Activated CD8-positive, alpha-beta T cell treated with anti-CD3 and anti-CD28 coated beads for 36 hours (primary cell): ENCODE measurements at regions of chr4 and their contacts with region 1.

Region 1: DNA sequence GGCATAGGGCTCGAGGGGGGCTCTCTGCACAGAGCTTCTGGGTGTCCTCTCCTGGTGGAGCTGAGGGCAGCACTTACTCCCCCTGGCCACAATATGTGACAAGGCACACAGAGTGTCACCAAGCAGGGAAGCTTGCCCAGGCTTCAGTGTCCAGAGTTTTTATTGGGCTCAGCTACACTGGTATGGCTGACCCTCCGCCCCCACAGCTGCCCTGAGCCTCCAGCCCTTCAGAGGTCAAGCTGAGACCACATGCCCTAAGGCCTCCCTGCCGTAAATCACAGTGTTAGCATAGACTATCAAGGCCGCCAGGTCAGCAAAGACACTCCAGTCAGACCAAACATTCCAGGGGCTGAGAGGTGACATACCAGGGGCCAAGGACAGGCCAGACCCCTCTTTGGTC is 59.0 kb downstream of the EVC start:
- DNase-seq: no peak
- ATAC-seq: no peak
- H3K4me3 Mint-ChIP-seq: no peak overlapping the region
- H3K27ac Mint-ChIP-seq: no peak overlapping the region
- H3K4me1 Mint-ChIP-seq: no peaks in the 10 kb centered on the region
- H3K27me3 Mint-ChIP-seq: peaks cover 2% of the 10 kb centered on the region
- CTCF ChIP-seq: no peak

Region 2: DNA sequence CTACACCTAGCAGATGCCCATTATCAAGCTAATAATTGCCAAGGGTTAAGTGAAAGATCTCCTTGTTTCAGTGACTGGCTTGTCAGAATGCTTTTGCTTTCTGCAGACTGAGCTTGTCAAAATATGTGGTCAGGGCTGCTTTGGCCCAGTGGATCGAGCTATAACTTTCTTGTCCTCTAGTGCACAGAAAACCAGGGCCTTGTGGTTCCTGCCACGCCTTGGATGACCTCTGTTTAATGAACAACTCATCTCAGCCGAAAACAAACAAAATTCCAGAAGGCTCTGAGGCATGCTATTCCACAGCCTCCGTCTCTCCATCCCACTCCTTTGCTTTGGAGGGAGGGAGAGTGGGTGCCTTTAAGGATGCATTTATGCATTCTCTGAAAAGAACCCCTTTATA is 47.7 kb before region 1 on chr4:
- CTCF ChIA-PET with region 1: no interaction called
- POLR2A ChIA-PET with region 1: no interaction called
- intact Hi-C with region 1: no loop called
- DNase-seq: no peak
- ATAC-seq: no peak
- H3K4me3 Mint-ChIP-seq: no peak overlapping the region
- H3K27ac Mint-ChIP-seq: no peak overlapping the region
- H3K4me1 Mint-ChIP-seq: no peaks in the 10 kb centered on the region
- H3K27me3 Mint-ChIP-seq: peaks cover 2% of the 10 kb centered on the region
- CTCF ChIP-seq: no peak

Region 3: GRCh38 chr4:5758741-5759140 is 11.3 kb before region 1 on chr4:
- CTCF ChIA-PET with region 1: no interaction called
- POLR2A ChIA-PET with region 1: no interaction called
- intact Hi-C with region 1: loop called (anchors 1 kb)
- DNase-seq: peak; percentile 85
- ATAC-seq: peak; percentile 98
- H3K4me3 Mint-ChIP-seq: no peak overlapping the region
- H3K27ac Mint-ChIP-seq: no peak overlapping the region
- H3K4me1 Mint-ChIP-seq: peaks cover 5% of the 10 kb centered on the region
- H3K27me3 Mint-ChIP-seq: no peaks in the 10 kb centered on the region
- CTCF ChIP-seq: no peak